ENCODE measurements at regions of chr10 and their contacts with region 1.

Region 1: GRCh38 chr10:24724381-24725228 is 918 bp upstream of the ARHGAP21 start:
- DNase-seq: peak; percentile 99
- H3K4me3 Mint-ChIP-seq: peak overlapping the region; percentile 93
- H3K27ac Mint-ChIP-seq: peak overlapping the region; percentile 96
- H3K4me1 Mint-ChIP-seq: peaks cover 26% of the 10 kb centered on the region
- H3K27me3 Mint-ChIP-seq: no peaks in the 10 kb centered on the region

Region 2: GRCh38 chr10:23095404-23095965 is 1629.1 kb before region 1 on chr10 and contains the start of gene MSRB2:
- intact Hi-C with region 1: loop called (anchors 5 kb)
- DNase-seq: peak; percentile 90
- H3K4me3 Mint-ChIP-seq: peak within 1 kb of the TSS; percentile 89
- H3K27ac Mint-ChIP-seq: peak within 1 kb of the TSS; percentile 93
- H3K4me1 Mint-ChIP-seq: peaks cover 40% of the 10 kb centered on the region
- H3K27me3 Mint-ChIP-seq: peaks cover 18% of the 10 kb centered on the region
- total RNA-seq, gene MSRB2: 3.3 and 3.9 TPM in 2 replicates

Region 3: DNA sequence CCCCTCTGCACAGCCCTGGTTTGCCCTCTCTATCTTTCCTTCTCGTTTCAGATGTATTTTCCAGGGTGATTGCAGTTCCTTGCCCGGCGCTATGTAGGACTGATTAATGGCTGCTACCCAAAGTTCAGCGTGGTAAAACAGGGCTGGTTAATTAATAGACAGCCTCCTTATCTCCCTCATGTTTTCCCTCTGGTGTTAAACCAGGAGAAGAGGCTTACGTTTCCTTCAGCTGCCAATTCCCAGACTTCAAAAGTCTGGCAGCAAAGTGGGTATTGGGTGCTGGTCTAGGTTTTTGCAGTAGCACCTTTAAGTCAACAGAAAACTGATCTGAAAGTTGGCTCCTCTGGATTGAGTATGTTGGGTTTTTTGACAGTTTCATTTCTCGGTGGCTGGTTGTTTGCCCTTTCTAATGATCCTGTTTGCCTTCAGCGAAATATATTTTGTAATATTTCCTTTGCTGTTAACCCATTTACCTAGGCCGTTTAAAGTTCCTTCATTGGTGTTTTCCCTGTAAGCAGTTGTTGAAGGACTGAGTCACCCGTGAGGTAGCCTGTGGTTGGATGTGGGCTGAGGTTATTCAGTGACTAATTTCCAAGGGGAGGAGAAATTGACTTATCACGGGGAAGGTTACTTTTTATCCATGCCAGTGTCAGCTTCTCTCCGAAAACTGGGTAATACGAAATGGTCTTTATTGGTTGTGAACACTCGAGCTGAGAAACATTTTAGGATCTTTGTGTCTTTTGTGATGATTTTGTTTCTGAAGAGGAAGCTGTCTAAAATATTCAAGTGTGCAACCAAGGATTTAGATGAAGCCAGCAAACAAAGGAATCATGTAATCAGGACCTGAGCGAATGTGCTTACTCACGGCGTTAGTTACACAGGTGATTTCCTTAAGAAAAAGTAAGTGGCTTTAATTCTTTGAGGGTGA is 258.4 kb before region 1 on chr10:
- intact Hi-C with region 1: loop called (anchors 10 kb)
- DNase-seq: peak; percentile 84
- H3K4me3 Mint-ChIP-seq: peak overlapping the region; percentile 75
- H3K27ac Mint-ChIP-seq: peak overlapping the region; percentile 86
- H3K4me1 Mint-ChIP-seq: peaks cover 46% of the 10 kb centered on the region
- H3K27me3 Mint-ChIP-seq: peaks cover 14% of the 10 kb centered on the region

Region 4: GRCh38 chr10:24590697-24591457 is 133.7 kb before region 1 on chr10:
- intact Hi-C with region 1: no loop called
- DNase-seq: no peak
- H3K4me3 Mint-ChIP-seq: no peak overlapping the region
- H3K27ac Mint-ChIP-seq: peak overlapping the region; percentile 0
- H3K4me1 Mint-ChIP-seq: peaks cover 4% of the 10 kb centered on the region
- H3K27me3 Mint-ChIP-seq: no peaks in the 10 kb centered on the region

Region 5: DNA sequence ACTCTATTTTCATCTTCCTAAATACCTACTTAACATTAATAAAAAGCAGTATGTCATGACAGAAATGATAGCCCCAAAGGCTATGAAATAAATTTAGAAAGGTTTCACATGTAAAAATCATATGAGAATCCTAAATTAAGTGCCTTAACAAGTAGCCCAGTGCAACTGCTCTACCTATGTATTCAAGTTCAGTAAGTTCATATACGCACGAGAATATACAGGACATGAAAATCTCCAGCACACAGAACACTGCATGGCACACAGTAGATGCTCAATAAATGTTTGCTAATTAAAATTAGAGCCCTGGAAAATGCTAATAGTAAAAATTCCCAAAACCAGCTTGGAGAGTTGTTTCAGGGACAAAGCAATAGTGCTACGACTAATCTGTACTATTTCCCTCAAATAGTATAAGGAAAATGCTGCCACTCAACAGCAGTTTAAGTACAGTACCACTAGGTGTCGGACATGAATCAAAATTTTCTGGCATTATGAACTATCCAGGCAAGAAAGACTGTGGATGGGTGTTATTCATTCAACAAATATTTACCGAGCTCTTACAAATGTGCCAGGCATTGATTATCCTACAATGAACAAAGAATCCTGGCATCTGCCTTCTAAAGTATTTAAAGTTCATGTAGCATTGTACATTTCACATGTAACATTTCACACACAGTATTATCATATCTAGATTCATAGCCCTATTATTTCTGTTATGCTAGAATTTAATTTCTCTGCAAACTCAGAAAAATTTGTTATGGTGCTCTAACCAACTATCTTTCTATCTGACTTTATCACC is 81.8 kb before region 1 on chr10:
- intact Hi-C with region 1: loop called (anchors 2 kb)
- DNase-seq: peak; percentile 79
- H3K4me3 Mint-ChIP-seq: no peak overlapping the region
- H3K27ac Mint-ChIP-seq: no peak overlapping the region
- H3K4me1 Mint-ChIP-seq: peaks cover 3% of the 10 kb centered on the region
- H3K27me3 Mint-ChIP-seq: no peaks in the 10 kb centered on the region

Region 6: GRCh38 chr10:24713086-24713485 is 11.5 kb before region 1 on chr10:
- intact Hi-C with region 1: no loop called
- DNase-seq: no peak
- H3K4me3 Mint-ChIP-seq: no peak overlapping the region
- H3K27ac Mint-ChIP-seq: no peak overlapping the region
- H3K4me1 Mint-ChIP-seq: peaks cover 17% of the 10 kb centered on the region
- H3K27me3 Mint-ChIP-seq: no peaks in the 10 kb centered on the region

Region 7: GRCh38 chr10:24814568-24815313 is 90.1 kb after region 1 on chr10:
- intact Hi-C with region 1: no loop called
- DNase-seq: no peak
- H3K4me3 Mint-ChIP-seq: no peak overlapping the region
- H3K27ac Mint-ChIP-seq: no peak overlapping the region
- H3K4me1 Mint-ChIP-seq: peaks cover 5% of the 10 kb centered on the region
- H3K27me3 Mint-ChIP-seq: no peaks in the 10 kb centered on the region

Region 8: GRCh38 chr10:24826019-24826418 is 101.4 kb after region 1 on chr10:
- intact Hi-C with region 1: loop called (anchors 1 kb)
- DNase-seq: no peak
- H3K4me3 Mint-ChIP-seq: peak overlapping the region; percentile 60
- H3K27ac Mint-ChIP-seq: no peak overlapping the region
- H3K4me1 Mint-ChIP-seq: peaks cover 31% of the 10 kb centered on the region
- H3K27me3 Mint-ChIP-seq: no peaks in the 10 kb centered on the region

Region 9: DNA sequence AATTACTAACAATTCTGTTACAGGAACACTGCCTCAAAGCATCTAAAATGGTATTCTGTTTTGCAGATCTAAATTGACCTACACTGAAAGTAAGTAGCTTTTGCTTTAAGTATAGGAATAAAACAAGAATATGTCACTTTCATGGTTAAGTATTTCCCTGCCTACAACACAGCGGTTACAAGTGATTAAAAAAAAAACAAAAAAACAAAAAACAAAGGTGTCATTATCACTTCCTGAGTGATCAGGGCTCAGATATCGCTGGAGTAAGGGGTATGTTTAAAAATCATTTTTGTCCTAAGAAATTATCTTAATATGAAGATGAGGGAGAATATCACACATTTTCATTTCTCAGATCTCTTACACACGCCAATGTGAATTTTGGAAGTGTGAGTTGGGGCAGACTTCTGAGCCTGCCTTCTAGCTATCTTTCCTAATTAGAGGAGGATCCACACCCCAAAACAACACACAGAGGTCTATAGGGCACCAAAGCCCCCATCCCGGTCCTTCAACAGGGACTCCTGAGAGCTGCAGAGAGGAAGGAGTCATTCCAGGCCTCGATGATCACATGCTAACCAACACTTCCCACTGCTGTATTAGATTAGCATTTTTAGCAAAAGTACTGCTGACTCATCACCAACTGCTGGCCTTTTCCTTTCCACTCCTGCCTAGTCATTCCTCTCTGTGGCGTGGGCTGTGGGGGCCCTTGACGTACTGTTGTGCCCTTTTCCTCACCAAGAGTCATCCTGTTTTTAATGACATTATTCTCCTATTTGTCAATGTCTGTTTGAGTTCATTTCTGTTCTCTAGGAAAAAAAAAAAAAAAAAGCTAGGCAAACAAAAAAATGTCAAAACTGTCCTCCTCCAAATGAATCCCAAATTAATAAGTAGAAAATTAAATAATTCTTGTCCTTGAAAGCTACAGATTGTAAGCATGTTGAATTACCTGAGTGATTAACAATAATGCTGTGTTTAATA is 196.6 kb after region 1 on chr10:
- intact Hi-C with region 1: loop called (anchors 1 kb)
- DNase-seq: peak; percentile 77
- H3K4me3 Mint-ChIP-seq: peak overlapping the region; percentile 55
- H3K27ac Mint-ChIP-seq: peak overlapping the region; percentile 93
- H3K4me1 Mint-ChIP-seq: peaks cover 23% of the 10 kb centered on the region
- H3K27me3 Mint-ChIP-seq: no peaks in the 10 kb centered on the region

Region 10: DNA sequence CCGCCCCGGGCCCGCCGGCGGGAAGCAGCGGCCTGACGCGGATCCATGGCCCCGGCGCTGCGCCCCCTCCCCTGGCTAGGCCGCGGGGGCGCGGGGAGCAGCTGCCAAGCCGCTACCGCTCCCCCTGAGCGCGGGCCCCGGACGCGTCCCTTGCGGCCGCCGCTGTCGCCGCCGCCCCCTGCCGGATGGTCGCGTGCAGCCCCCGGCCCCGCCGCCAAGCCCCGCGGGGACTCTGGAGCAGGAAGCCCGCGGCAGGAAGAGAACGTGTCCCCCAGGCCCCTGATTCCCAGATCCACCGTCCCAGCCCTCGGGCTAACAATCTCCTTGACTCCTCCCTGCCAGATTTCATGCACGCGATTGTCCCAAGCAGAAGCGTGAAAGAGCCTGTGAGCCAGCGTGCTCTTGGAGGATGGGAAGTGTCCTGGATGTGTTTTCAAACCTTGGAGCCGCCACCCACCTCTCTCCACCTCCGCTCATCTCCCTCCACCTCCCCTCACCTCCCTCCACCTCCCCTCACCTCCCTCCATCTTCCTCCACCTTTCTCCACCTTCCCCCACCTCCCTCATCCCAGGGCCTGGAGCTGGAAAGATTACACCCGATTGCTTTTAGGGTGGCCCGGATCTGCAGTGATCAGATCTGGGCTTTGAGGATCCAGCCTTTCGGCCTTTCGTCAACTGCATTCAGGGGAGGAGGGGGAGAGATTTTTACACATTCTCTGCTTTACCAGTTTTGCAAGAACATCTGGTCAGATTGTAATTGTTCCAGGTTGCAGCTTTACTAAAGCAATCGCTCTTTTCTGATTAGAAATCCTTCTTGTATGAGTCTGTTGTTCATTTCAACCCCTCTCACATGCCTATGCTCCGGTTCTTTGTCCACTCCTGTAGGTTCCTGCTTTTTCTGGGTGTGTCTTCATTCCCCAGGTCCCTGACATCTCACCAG is 228.4 kb after region 1 on chr10:
- intact Hi-C with region 1: no loop called
- DNase-seq: peak; percentile 85
- H3K4me3 Mint-ChIP-seq: peak overlapping the region; percentile 78
- H3K27ac Mint-ChIP-seq: peak overlapping the region; percentile 82
- H3K4me1 Mint-ChIP-seq: peaks cover 21% of the 10 kb centered on the region
- H3K27me3 Mint-ChIP-seq: peaks cover 2% of the 10 kb centered on the region